ENCODE measurements at regions of chr2 and their contacts with region 1.

Region 1: DNA sequence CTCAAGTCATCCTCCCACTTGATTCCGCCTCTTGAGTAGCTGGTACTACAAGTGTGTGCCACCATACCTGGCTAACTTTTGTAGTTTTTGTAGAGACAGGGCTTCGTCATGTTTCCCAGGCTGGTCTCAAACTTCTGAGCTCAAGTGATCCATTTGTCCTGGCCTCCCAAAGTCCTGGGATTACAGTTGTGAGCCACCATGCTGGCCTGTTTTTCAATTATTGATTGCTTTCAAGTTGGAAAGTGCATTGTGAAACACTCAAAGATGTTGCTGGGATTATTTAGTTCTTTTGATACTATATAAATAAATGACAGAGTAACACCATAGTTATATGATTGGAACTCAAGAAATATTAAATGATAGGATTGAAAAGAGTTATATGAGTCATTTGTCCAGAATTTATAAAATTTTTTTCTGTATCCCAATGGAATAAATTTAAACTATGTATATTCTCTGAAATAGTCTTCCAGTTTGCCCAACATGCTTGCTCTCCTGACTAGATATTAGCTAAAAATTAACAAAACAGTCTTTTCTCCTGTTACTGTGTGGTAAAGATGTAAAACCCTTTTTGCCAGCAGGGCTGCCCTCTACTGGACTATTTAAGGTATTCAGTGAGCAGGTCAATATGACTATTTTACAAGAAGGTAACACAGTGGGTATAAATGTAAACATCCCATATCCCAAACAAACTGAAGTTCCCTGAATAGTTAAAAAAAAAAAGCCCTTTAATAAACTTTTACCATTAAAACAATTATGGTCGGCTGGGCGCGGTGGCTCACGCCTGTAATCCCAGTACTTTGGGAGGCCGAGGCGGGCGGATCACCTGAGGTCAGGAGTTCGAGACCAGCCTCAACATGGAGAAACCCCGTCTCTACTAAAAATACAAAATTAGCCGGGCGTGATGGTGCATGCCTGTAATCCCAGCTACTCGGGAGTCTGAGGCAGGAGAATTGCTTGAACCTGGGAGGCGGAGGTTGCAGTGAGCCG is 42.7 kb downstream of the ACSL3 start:
- DNase-seq: no peak
- ATAC-seq: peak; percentile 73

Region 2: GRCh38 chr2:222860740-222861410 is 42.7 kb before region 1 on chr2 and contains the start of gene ACSL3:
- intact Hi-C with region 1: loop called (anchors 5 kb)
- DNase-seq: peak; percentile 99
- ATAC-seq: peak; percentile 96
- total RNA-seq, gene ACSL3: 48.8 TPM

Region 3: GRCh38 chr2:222993920-222994650 is 90.6 kb after region 1 on chr2:
- intact Hi-C with region 1: no loop called
- DNase-seq: peak; percentile 85
- ATAC-seq: peak; percentile 100

Measured in left ventricle myocardium superior (tissue), 1 donor.